MCF 10A (cell line): ENCODE measurements at regions of chr12 and their contacts with region 1.

Region 1: GRCh38 chr12:131836193-131836592 is 8.0 kb downstream of the MMP17 start:
- DNase-seq: no peak
- H3K4me3 Mint-ChIP-seq: no peak overlapping the region
- H3K27ac Mint-ChIP-seq: no peak overlapping the region
- H3K4me1 Mint-ChIP-seq: no peaks in the 10 kb centered on the region
- H3K27me3 Mint-ChIP-seq: no peaks in the 10 kb centered on the region
- CTCF ChIP-seq: peak; percentile 41

Region 2: DNA sequence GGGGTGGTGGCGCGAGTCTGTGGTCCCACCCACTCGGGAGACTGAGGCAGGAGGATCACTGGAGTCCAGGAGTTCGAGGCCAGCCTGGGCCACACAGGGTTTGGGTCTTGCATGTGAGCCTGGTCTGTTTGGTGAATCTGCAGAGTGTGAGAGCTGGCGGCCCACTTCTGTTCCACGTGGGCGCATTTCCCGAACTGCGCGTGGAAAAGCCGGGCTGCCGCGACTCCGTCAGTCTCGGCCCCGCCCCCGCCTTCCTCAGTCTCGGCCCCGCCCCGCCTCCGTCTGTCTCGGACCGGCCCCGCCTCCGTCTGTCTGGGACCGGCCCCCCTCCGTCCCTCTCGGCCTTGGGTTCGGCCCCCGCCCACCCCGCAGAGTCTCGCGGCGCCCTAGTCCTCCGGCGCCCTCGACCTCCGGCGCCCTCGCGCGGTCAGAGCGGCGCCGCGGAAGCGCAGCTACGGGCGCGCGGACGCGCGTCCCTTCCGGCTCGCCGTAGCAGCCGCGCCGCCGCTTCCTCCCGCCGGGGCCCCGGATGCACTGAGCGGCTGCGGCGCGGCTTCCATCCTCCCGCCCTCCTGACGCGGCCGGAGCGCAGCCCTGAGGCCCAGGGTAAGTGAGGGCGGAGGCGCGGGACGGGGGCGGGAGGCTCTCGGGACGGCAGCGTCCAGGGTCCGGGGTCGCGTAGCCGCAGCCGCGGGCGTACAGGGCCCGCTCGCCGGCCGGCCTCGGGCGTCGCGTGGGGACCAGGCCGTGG is 113.4 kb after region 1 on chr12 and contains the start of gene EP400:
- CTCF ChIA-PET with region 1: interaction called, 9 read pairs
- POLR2A ChIA-PET with region 1: interaction called, 3 read pairs
- intact Hi-C with region 1: loop called (anchors 1 kb)
- DNase-seq: peak; percentile 94
- H3K4me3 Mint-ChIP-seq: peak within 1 kb of the TSS; percentile 75
- H3K27ac Mint-ChIP-seq: peak within 1 kb of the TSS; percentile 70
- H3K4me1 Mint-ChIP-seq: peaks cover 9% of the 10 kb centered on the region
- H3K27me3 Mint-ChIP-seq: no peaks in the 10 kb centered on the region
- CTCF ChIP-seq: peak; percentile 54
- total RNA-seq, gene EP400: 52.4 and 54.8 TPM in 2 replicates

Region 3: GRCh38 chr12:132003846-132004245 is 167.7 kb after region 1 on chr12:
- CTCF ChIA-PET with region 1: no interaction called
- POLR2A ChIA-PET with region 1: no interaction called
- intact Hi-C with region 1: loop called (anchors 1 kb)
- DNase-seq: no peak
- H3K4me3 Mint-ChIP-seq: no peak overlapping the region
- H3K27ac Mint-ChIP-seq: no peak overlapping the region
- H3K4me1 Mint-ChIP-seq: no peaks in the 10 kb centered on the region
- H3K27me3 Mint-ChIP-seq: no peaks in the 10 kb centered on the region
- CTCF ChIP-seq: no peak

Region 4: DNA sequence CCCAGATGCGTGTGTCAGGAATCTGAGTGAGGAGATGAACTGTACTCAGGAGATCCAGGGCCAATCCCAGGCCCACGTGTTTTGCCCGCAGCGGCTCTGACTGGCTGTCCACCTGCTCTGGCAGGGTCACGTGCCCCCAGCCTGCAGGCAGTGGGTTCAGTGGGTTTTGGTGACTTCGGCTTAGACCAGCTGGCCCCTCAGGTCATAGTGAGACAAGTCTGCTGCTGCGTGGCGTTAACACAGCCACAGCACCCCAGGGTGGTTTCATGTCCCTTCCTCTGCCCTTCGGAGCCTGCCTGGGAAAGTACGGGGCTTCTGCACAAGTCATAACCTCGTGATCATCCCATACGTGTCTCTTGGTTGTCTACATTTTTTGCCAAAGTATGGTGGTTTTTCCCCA is 656.3 kb after region 1 on chr12:
- CTCF ChIA-PET with region 1: no interaction called
- POLR2A ChIA-PET with region 1: no interaction called
- intact Hi-C with region 1: no loop called
- DNase-seq: no peak
- H3K4me3 Mint-ChIP-seq: peak overlapping the region; percentile 71
- H3K27ac Mint-ChIP-seq: no peak overlapping the region
- H3K4me1 Mint-ChIP-seq: peaks cover 8% of the 10 kb centered on the region
- H3K27me3 Mint-ChIP-seq: no peaks in the 10 kb centered on the region
- CTCF ChIP-seq: no peak